K562 (cell line): ENCODE measurements at regions of chr6 and their contacts with region 1.

Region 1: DNA sequence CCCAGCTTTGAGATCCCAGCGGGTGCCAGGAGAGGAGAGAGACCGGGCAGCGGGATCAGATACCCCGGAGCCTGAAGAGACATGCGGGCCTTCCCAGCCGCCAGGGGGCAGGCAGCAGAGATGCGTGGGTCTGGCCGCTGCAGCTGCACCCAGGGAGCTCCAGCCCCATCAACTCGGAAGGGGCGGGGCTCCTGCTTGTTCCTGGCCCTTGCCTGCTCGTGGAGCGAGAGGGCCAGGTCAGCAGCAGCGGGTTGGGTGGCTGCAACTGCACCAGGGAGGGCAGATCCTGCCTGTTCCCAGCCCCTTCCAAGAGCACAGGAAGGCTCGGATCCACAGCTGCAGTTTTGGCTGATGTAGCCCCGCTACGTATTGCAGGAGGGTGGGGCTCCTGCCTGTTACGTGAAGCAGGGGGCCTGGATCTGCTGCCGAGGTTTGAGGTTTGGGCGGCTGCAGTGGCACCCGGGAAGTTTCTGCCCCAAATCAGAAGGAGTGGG is 532.8 kb downstream of the RFPL4B start:
- DNase-seq: peak; percentile 77 to 94 (median 81)
- ATAC-seq: peak; percentile 99
- H3K4me3 ChIP-seq: peak overlapping the region; percentile 57
- H3K27ac ChIP-seq: peak overlapping the region; percentile 20; the same call in 1 of the 3 replicates
- H3K4me1 ChIP-seq: peaks cover 0 to 7% of the 10 kb centered on the region in 2 experiments; a peak in 2 of 5 replicates
- H3K27me3 ChIP-seq: no peaks in the 10 kb centered on the region
- CTCF ChIP-seq: peak; percentile 76 to 84 (median 83)
- EP300 ChIP-seq: no peak; the same call in 1 of the 2 replicates
- POLR2A ChIP-seq: peak; percentile 67
- RAD21 ChIP-seq: peak; percentile 91 to 93

Region 2: DNA sequence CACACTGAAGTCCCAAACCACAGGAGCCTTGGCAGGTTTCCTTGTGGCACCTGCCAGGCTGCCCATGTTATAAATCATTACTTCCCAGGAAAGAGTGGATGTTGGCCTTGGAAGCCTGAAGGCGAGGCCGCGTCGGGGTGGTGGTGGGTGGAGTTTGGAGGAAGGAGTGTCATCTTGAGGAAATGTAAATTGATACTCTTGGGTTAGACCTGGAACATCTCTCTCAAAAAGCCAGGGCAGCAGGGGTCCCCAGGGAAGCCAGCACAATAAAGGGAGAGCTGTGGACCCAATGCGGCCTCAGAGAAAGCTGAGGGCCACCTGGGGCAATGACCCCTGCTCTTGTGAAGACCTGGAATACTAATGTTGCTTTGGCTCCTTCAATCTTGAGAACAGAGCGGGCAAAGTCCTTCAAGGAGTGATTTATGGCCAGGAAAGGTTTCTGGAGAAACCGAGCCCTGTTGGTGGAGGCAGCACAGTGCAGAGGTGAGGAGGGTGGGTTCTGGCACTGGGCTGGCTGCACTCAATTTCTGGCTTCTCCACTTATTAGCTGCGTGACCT is 1248.0 kb before region 1 on chr6:
- CTCF ChIA-PET with region 1: no interaction called
- POLR2A ChIA-PET with region 1: no interaction called
- in situ Hi-C with region 1: no loop called
- intact Hi-C with region 1: no loop called
- DNase-seq: no peak
- ATAC-seq: peak; percentile 68
- H3K4me3 ChIP-seq: no peak overlapping the region
- H3K27ac ChIP-seq: no peak overlapping the region
- H3K4me1 ChIP-seq: peaks cover 0 to 11% of the 10 kb centered on the region in 2 experiments; a peak in 3 of 5 replicates
- H3K27me3 ChIP-seq: peaks cover 22 to 25% of the 10 kb centered on the region in 2 experiments
- CTCF ChIP-seq: 0 out of 6 replicates have a peak, but pooled peaks of 1 of the 3 experiments have one; percentile 9
- EP300 ChIP-seq: no peak
- POLR2A ChIP-seq: no peak
- RAD21 ChIP-seq: no peak

Region 3: DNA sequence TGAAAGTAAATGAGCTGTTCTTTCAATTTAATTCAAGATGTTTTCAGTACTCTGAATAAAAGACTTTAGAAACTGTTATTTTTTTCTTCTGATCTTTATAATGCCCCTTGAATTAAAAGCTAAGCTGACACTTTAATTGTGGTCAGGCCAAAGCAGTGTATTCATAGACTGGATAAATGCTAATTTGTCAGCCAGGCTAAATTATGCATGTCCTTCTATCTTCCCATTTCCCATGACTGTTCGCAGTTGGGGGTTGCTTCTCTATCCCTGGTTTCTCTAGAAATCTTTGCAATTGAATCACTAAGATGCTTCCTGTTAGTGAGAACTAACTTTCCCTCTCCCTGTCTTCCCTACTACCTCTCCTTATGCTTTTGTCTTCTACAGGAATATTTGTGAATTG is 136.6 kb before region 1 on chr6:
- CTCF ChIA-PET with region 1: no interaction called
- POLR2A ChIA-PET with region 1: no interaction called
- in situ Hi-C with region 1: no loop called
- intact Hi-C with region 1: no loop called
- DNase-seq: no peak
- ATAC-seq: no peak
- H3K4me3 ChIP-seq: no peak overlapping the region
- H3K27ac ChIP-seq: no peak overlapping the region
- H3K4me1 ChIP-seq: no peaks in the 10 kb centered on the region
- H3K27me3 ChIP-seq: no peaks in the 10 kb centered on the region
- CTCF ChIP-seq: no peak
- EP300 ChIP-seq: no peak
- POLR2A ChIP-seq: no peak
- RAD21 ChIP-seq: no peak

Region 4: GRCh38 chr6:112780498-112781096 is 99.4 kb before region 1 on chr6:
- CTCF ChIA-PET with region 1: no interaction called
- POLR2A ChIA-PET with region 1: no interaction called
- in situ Hi-C with region 1: no loop called
- intact Hi-C with region 1: loop called (anchors 2 kb)
- DNase-seq: peak; percentile 61 to 79 (median 66)
- ATAC-seq: peak; percentile 89
- H3K4me3 ChIP-seq: no peak overlapping the region
- H3K27ac ChIP-seq: no peak overlapping the region
- H3K4me1 ChIP-seq: no peaks in the 10 kb centered on the region
- H3K27me3 ChIP-seq: no peaks in the 10 kb centered on the region
- CTCF ChIP-seq: peak; percentile 63 to 78 (median 73)
- EP300 ChIP-seq: no peak
- POLR2A ChIP-seq: no peak
- RAD21 ChIP-seq: peak; percentile 79 to 80

Region 5: GRCh38 chr6:112956696-112957528 is 76.9 kb after region 1 on chr6:
- CTCF ChIA-PET with region 1: no interaction called
- POLR2A ChIA-PET with region 1: no interaction called
- in situ Hi-C with region 1: no loop called
- intact Hi-C with region 1: loop called (anchors 2 kb)
- DNase-seq: peak; percentile 37 to 90 (median 62)
- ATAC-seq: peak; percentile 94
- H3K4me3 ChIP-seq: no peak overlapping the region
- H3K27ac ChIP-seq: peak overlapping the region; percentile 91
- H3K4me1 ChIP-seq: peaks cover 8 to 13% of the 10 kb centered on the region in 2 experiments; a peak in 3 of 5 replicates
- H3K27me3 ChIP-seq: no peaks in the 10 kb centered on the region
- CTCF ChIP-seq: no peak
- EP300 ChIP-seq: peak; percentile 92
- POLR2A ChIP-seq: no peak
- RAD21 ChIP-seq: 0 out of 4 replicates have a peak, but pooled peaks of 1 of the 2 experiments have one; percentile 4

Region 6: DNA sequence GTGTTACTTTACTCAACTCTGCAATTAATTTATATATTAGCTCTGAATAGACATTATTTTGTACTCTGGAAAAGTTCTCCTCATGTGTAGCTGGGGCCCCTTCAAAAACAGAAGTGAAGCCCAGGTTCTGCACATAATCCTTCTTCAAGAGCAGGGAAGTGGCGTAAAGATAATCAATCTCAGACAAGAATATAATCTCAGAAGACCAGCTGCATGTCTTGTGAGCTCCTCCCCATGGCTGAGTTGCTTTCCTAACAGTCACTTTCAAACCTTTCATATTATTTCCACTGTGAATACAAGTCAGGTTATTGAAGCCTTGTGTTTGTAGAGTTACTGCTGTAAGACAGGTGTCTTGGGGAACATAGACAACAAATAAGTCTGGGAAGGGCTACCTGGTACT is 159.0 kb after region 1 on chr6:
- CTCF ChIA-PET with region 1: no interaction called
- POLR2A ChIA-PET with region 1: no interaction called
- in situ Hi-C with region 1: no loop called
- intact Hi-C with region 1: loop called (anchors 1 kb)
- DNase-seq: peak in 1 of 4 experiments; percentile 20
- ATAC-seq: peak; percentile 61; the same call in 2 of the 3 replicates
- H3K4me3 ChIP-seq: no peak overlapping the region
- H3K27ac ChIP-seq: no peak overlapping the region
- H3K4me1 ChIP-seq: no peaks in the 10 kb centered on the region
- H3K27me3 ChIP-seq: no peaks in the 10 kb centered on the region
- CTCF ChIP-seq: peak in 1 of 3 experiments; percentile 53; a peak in 2 of 6 replicates
- EP300 ChIP-seq: no peak
- POLR2A ChIP-seq: no peak
- RAD21 ChIP-seq: peak; percentile 66 to 83

Region 7: DNA sequence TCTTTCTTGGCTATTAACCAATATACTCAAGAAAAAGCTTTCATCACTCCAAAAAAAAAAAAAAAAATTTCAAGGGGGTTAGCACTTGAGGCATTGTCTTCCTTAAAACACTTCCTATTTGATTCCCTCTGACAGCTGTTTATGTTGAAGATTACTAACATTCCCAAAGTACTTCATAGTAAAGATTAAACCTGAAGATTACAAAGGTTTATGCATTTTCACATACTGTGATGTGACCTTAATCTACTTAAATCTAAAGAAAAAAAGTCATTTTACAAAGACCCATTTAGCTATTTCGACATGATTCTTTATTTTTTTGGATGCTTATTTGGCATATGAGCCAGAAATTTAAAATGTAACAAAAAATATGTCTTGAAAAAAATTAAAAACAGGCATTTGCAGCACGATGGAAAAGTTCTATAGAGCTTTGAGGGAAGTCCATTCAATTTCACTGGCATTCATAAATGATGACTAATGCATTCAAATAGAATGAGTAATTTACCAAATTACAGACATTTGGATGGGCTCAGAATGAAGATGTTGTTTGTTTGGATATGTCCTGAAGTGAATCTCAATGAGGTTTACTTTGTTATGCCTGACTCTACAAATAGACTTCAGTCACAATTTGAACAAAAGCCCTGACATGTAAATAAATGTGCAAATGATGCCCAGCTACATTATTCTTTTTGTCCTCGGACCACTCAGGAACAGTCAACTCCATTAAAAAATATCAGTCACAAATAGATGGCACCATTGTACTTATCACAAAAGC is 302.6 kb after region 1 on chr6:
- CTCF ChIA-PET with region 1: no interaction called
- POLR2A ChIA-PET with region 1: no interaction called
- in situ Hi-C with region 1: no loop called
- intact Hi-C with region 1: loop called (anchors 10 kb)
- DNase-seq: no peak
- ATAC-seq: no peak
- H3K4me3 ChIP-seq: no peak overlapping the region
- H3K27ac ChIP-seq: no peak overlapping the region
- H3K4me1 ChIP-seq: no peaks in the 10 kb centered on the region
- H3K27me3 ChIP-seq: no peaks in the 10 kb centered on the region
- CTCF ChIP-seq: no peak
- EP300 ChIP-seq: no peak
- POLR2A ChIP-seq: no peak
- RAD21 ChIP-seq: no peak

Region 8: DNA sequence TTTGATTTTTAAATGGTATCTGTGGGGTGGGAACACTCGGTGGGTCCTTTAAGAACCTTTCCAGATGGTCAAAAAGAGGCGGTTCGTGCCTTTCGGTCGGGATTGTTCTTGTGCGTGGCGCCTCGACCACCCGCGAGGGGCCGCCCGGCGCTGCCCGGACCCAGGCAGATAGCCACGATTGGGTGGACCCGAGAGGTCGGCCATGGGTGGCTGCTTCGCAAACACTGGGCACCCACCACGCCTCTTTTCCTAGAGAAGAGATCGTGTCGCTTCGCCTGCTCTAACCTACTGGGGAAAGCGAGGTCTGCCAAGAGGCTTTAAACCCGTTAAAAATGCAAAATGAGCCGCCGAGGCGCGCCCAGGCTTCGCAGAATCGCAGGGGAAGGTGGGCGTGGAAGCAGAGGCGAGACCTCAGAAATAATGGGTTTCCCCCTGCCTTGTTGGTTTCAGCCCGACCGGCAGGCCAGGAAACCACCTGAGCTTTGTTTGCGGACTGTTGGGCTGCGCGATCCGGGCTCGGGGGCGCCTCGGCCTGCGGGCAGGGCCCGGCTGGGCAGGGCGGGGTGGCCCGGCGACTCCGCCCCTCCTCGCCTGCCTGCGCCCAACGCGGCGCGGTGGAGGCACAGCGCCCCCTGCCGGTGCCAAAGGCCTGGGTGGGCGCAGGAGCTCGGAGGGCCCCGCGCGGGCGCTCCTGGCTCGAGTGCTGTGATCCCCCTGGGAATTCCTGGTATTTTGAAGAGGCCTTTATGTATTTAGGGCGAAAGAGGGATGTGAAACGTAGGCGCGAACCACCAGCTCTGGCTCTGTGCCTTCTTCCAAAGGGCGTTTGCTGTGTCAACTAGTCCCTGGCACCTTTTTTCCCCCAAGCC is 978.7 kb after region 1 on chr6:
- CTCF ChIA-PET with region 1: no interaction called
- POLR2A ChIA-PET with region 1: interaction called, 3 read pairs
- in situ Hi-C with region 1: no loop called
- intact Hi-C with region 1: loop called (anchors 5 kb)
- DNase-seq: peak; percentile 73 to 92 (median 90)
- ATAC-seq: peak; percentile 90
- H3K4me3 ChIP-seq: peak overlapping the region; percentile 42
- H3K27ac ChIP-seq: no peak overlapping the region
- H3K4me1 ChIP-seq: peaks cover 6 to 25% of the 10 kb centered on the region in 2 experiments
- H3K27me3 ChIP-seq: peaks cover 0 to 15% of the 10 kb centered on the region in 2 experiments; a peak in 2 of 5 replicates
- CTCF ChIP-seq: peak; percentile 70 to 89 (median 79)
- EP300 ChIP-seq: no peak
- POLR2A ChIP-seq: no peak
- RAD21 ChIP-seq: peak; percentile 89 to 90

Region 9: DNA sequence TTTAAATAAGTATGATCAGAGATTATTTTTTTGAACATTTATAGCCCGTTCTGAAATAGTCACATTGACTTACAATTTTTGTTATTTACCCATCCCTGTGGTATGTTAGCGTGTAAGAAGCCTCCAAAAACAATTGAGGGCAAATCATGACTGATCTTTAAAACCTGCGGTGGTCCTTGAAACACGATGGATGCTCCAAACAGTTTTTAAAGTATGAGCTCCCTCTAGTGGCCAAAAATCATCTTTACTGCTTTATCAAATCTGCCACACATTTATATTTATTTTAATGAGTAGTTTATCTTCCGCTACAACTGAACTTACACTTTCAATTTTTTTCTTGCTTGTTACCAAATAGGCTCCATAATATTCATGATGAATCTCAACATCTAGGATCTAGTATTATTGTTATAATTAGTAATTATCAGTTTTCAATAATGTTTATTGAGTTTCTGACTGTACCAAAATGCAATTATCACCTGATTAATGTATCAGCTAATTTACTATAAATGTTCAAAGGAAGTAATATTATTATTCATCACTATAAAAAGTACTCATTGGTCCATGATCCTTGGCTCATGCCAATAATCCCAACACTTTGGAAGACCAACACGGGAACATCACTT is 1029.4 kb after region 1 on chr6:
- CTCF ChIA-PET with region 1: no interaction called
- POLR2A ChIA-PET with region 1: no interaction called
- in situ Hi-C with region 1: loop called (anchors 25 kb)
- intact Hi-C with region 1: no loop called
- DNase-seq: peak; percentile 48 to 69 (median 50)
- ATAC-seq: peak; percentile 75
- H3K4me3 ChIP-seq: no peak overlapping the region
- H3K27ac ChIP-seq: no peak overlapping the region
- H3K4me1 ChIP-seq: no peaks in the 10 kb centered on the region
- H3K27me3 ChIP-seq: no peaks in the 10 kb centered on the region
- CTCF ChIP-seq: peak; percentile 45 to 76 (median 48); a peak in 5 of 6 replicates
- EP300 ChIP-seq: no peak
- POLR2A ChIP-seq: no peak
- RAD21 ChIP-seq: peak; percentile 76 to 80